Activated CD4-positive, alpha-beta memory T cell treated with anti-CD3 and anti-CD28 coated beads for 36 hours (primary cell): ENCODE measurements at regions of chr21 and their contacts with region 1.

Region 1: GRCh38 chr21:14259747-14260146 is 43.8 kb downstream of the RBM11 start:
- DNase-seq: no peak
- H3K4me3 Mint-ChIP-seq: no peak overlapping the region
- H3K27ac Mint-ChIP-seq: no peak overlapping the region
- H3K4me1 Mint-ChIP-seq: no peaks in the 10 kb centered on the region
- H3K27me3 Mint-ChIP-seq: peaks cover 1% of the 10 kb centered on the region

Region 2: GRCh38 chr21:14215971-14216641 is 43.6 kb before region 1 on chr21 and contains the start of gene RBM11:
- CTCF ChIA-PET with region 1: no interaction called
- POLR2A ChIA-PET with region 1: no interaction called
- intact Hi-C with region 1: no loop called
- DNase-seq: peak; percentile 79
- H3K4me3 Mint-ChIP-seq: peak within 1 kb of the TSS; percentile 75
- H3K27ac Mint-ChIP-seq: no peak within 1 kb of the TSS
- H3K4me1 Mint-ChIP-seq: peaks cover 4% of the 10 kb centered on the region
- H3K27me3 Mint-ChIP-seq: peaks cover 3% of the 10 kb centered on the region
- total RNA-seq, gene RBM11: 1.5 to 3.1 TPM

Region 3: DNA sequence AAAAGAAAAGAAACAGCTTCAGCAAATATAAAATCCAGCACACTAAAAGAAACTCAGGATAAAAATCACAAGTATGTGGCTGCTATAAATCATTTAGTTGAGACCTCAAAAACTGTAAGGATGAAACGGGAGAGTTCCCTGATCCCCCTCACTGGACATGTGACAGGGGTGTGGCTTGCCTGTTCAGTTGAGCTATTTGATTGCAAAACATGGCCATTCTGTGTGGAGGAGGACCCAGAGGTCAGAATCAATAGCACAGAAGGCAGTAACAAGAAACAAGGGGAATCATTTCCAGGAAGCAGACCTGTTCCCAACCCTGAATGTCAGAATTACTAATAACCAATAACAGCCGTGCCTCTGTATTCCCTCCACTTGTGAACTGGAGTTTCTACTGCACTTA is 15.9 kb before region 1 on chr21:
- CTCF ChIA-PET with region 1: interaction called, 16 read pairs
- POLR2A ChIA-PET with region 1: no interaction called
- intact Hi-C with region 1: no loop called
- DNase-seq: no peak
- H3K4me3 Mint-ChIP-seq: no peak overlapping the region
- H3K27ac Mint-ChIP-seq: no peak overlapping the region
- H3K4me1 Mint-ChIP-seq: peaks cover 3% of the 10 kb centered on the region
- H3K27me3 Mint-ChIP-seq: peaks cover 6% of the 10 kb centered on the region

Region 4: DNA sequence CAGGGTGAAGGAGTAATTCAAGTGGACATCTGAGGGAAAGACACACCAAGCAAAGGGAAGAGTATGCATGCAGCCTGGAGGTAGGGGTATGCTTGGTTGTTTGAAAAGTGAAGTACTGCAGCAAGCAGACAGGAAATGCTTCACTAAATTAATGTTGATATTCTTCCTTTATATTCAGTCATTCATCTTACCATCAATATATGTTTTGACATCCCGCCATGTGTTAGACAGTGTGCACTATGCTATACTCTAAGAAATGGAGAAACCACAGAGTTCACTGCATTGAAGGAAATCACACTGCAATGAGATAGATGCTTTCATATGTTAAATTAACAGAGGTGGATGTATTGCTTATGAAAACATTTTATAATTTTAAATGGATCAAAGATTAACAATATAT is 40.3 kb after region 1 on chr21:
- CTCF ChIA-PET with region 1: no interaction called
- POLR2A ChIA-PET with region 1: no interaction called
- intact Hi-C with region 1: no loop called
- DNase-seq: no peak
- H3K4me3 Mint-ChIP-seq: no peak overlapping the region
- H3K27ac Mint-ChIP-seq: no peak overlapping the region
- H3K4me1 Mint-ChIP-seq: no peaks in the 10 kb centered on the region
- H3K27me3 Mint-ChIP-seq: peaks cover 1% of the 10 kb centered on the region

Region 5: GRCh38 chr21:14737922-14738321 is 478.2 kb after region 1 on chr21:
- CTCF ChIA-PET with region 1: interaction called, 3 read pairs
- POLR2A ChIA-PET with region 1: no interaction called
- intact Hi-C with region 1: loop called (anchors 1 kb)
- DNase-seq: peak; percentile 38
- H3K4me3 Mint-ChIP-seq: no peak overlapping the region
- H3K27ac Mint-ChIP-seq: no peak overlapping the region
- H3K4me1 Mint-ChIP-seq: peaks cover 31% of the 10 kb centered on the region
- H3K27me3 Mint-ChIP-seq: no peaks in the 10 kb centered on the region

Region 6: GRCh38 chr21:14773777-14774345 is 514.1 kb after region 1 on chr21:
- CTCF ChIA-PET with region 1: interaction called, 4 read pairs
- POLR2A ChIA-PET with region 1: no interaction called
- intact Hi-C with region 1: loop called (anchors 5 kb)
- DNase-seq: peak; percentile 70
- H3K4me3 Mint-ChIP-seq: no peak overlapping the region
- H3K27ac Mint-ChIP-seq: no peak overlapping the region
- H3K4me1 Mint-ChIP-seq: no peaks in the 10 kb centered on the region
- H3K27me3 Mint-ChIP-seq: peaks cover 3% of the 10 kb centered on the region

Region 7: GRCh38 chr21:14864211-14865021 is 604.7 kb after region 1 on chr21:
- CTCF ChIA-PET with region 1: no interaction called
- POLR2A ChIA-PET with region 1: no interaction called
- intact Hi-C with region 1: loop called (anchors 10 kb)
- DNase-seq: peak; percentile 66
- H3K4me3 Mint-ChIP-seq: no peak overlapping the region
- H3K27ac Mint-ChIP-seq: no peak overlapping the region
- H3K4me1 Mint-ChIP-seq: no peaks in the 10 kb centered on the region
- H3K27me3 Mint-ChIP-seq: peaks cover 4% of the 10 kb centered on the region

Region 8: DNA sequence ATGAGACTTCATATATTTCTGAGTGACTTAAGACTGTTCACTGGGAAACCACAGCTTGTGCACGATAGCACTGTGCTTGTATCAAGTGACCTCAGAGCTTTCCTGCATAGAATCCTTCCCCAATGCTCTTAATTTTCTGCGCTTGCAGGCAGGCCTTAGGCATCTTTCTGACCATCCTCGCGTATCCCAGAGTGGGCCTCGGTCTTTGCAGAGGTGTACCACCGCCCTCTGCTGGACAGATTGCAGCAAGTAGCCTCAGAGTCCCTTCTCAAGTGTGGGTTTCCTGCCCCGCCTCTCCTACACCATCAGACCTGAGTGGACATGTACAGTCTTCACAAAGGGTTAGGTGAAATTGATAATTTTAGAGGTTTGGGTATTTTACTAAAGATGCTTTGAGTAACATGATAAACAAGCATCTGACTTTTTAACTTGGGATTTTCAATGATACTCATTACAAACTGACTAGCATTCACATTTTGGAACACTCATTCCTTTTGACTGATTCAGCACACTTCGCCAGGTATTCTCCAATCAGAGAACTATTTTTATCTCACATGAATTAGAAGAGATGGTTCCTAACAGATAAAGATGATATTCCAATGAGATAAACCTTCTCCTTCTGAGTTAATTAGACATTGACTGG is 1223.5 kb after region 1 on chr21:
- CTCF ChIA-PET with region 1: interaction called, 3 read pairs
- POLR2A ChIA-PET with region 1: no interaction called
- intact Hi-C with region 1: loop called (anchors 5 kb)
- DNase-seq: peak; percentile 85
- H3K4me3 Mint-ChIP-seq: no peak overlapping the region
- H3K27ac Mint-ChIP-seq: no peak overlapping the region
- H3K4me1 Mint-ChIP-seq: peaks cover 20% of the 10 kb centered on the region
- H3K27me3 Mint-ChIP-seq: no peaks in the 10 kb centered on the region

Region 9: GRCh38 chr21:15592271-15592860 is 1332.6 kb after region 1 on chr21:
- CTCF ChIA-PET with region 1: interaction called, 4 read pairs
- POLR2A ChIA-PET with region 1: no interaction called
- intact Hi-C with region 1: loop called (anchors 5 kb)
- DNase-seq: no peak
- H3K4me3 Mint-ChIP-seq: no peak overlapping the region
- H3K27ac Mint-ChIP-seq: no peak overlapping the region
- H3K4me1 Mint-ChIP-seq: no peaks in the 10 kb centered on the region
- H3K27me3 Mint-ChIP-seq: peaks cover 3% of the 10 kb centered on the region